Dorsolateral prefrontal cortex (tissue), 120 donors: ENCODE measurements at regions of chr20 and their contacts with region 1.

Region 1: DNA sequence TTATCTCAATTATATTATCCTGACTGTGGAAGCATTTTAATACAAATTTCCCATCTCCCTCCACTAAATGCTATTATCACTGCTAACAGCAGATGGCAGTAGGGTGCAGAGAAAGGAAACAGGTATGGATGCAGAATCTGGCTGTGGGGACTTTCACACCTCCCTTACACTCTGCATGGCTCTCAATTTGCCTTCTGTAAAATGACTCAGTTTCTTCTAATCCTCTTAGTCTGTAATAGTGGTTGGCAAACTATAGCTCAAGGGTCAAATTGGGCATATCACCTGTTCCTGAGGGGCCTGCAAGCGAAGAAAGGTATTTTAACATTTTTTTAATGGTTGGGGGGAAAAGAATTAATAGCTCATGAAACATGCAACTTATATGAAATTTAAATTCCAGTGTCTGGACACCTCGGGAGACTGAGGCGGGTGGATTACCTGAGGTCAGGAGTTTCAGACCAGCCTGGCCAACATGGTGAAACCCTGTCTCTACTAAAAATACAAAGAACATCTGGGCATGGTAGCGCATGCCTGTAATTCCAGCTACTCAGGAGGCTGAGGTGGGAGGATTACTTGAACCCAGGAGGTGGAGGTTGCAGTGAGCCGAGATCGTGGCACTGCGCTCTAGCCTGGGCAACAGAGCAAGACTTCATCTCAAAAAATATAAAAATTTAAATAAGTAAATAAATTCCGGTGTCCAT is 83.5 kb downstream of the ZMYND8 start:
- DNase-seq: peak in 2 of 10 donors; percentile 51 to 52
- H3K4me3 ChIP-seq: no peak overlapping the region
- H3K27ac ChIP-seq: peak overlapping the region in 54 of 59 donors; percentile 1 to 91 (median 80)
- H3K27me3 ChIP-seq: no peaks in the 10 kb centered on the region
- CTCF ChIP-seq: peak; percentile 70 to 99 (median 94)

Region 2: GRCh38 chr20:47317127-47317895 is 44.3 kb after region 1 on chr20:
- intact Hi-C with region 1: loop called (anchors 5 kb)
- DNase-seq: peak in 6 of 10 donors; percentile 38 to 81 (median 58)
- H3K4me3 ChIP-seq: peak overlapping the region in 9 of 59 donors; percentile 6 to 50 (median 41)
- H3K27ac ChIP-seq: peak overlapping the region; percentile 93 to 100 (median 99)
- H3K27me3 ChIP-seq: no peaks in the 10 kb centered on the region
- CTCF ChIP-seq: no peak